ENCODE measurements at regions of chr10 and their contacts with region 1.

Region 1: GRCh38 chr10:1368842-1369171 is 312.6 kb downstream of the WDR37 start:
- DNase-seq: peak in 14 of 35 experiments; percentile 9 to 41 (median 25)
- ATAC-seq: peak in 3 of 4 experiments; percentile 53 to 71 (median 60)
- H3K4me3 ChIP-seq: no peak overlapping the region
- H3K4me3 Mint-ChIP-seq: no peak overlapping the region
- H3K27ac ChIP-seq: no peak overlapping the region
- H3K27ac Mint-ChIP-seq: no peak overlapping the region
- H3K4me1 ChIP-seq: peaks cover 0 to 2% of the 10 kb centered on the region in 2 experiments
- H3K4me1 Mint-ChIP-seq: no peaks in the 10 kb centered on the region
- H3K27me3 ChIP-seq: peaks cover 0 to 38% of the 10 kb centered on the region in 2 experiments
- H3K27me3 Mint-ChIP-seq: peaks cover 33 to 37% of the 10 kb centered on the region in 2 donors

Region 2: DNA sequence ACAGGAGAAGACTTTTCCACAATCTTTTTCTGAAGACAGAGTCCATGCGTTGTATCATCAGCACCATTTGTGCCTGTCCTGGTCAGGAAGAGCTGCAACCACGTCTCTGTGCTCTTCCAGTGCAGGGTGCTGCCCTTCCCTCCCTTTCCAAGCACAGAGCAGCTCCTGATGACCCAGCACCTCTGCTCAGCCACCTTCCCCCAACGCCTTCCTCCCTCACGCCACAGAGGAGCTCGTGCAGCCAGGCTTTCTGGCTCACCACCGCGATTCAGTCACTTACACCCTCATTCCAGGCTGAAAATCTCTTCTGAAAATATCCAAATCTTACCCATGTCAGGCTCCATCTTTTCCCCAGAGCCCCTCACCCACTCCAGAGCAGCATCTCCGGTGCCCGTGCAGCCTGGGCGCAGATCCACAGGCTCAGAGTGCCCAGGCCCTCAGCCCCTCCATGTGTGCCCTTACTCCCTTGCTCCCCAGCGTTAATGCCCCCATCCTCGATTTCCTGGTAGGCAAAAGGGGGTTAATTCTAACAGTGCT is 860.8 kb before region 1 on chr10:
- CTCF ChIA-PET with region 1: interaction called in 1 of 2 experiments, 10 read pairs
- POLR2A ChIA-PET with region 1: no interaction called
- DNase-seq: no peak
- ATAC-seq: no peak
- H3K4me3 ChIP-seq: no peak overlapping the region
- H3K4me3 Mint-ChIP-seq: no peak overlapping the region
- H3K27ac ChIP-seq: no peak overlapping the region
- H3K27ac Mint-ChIP-seq: no peak overlapping the region
- H3K4me1 ChIP-seq: peaks cover 0 to 10% of the 10 kb centered on the region in 2 experiments
- H3K4me1 Mint-ChIP-seq: peaks cover 13 to 24% (median 17%) of the 10 kb centered on the region in 3 donors
- H3K27me3 ChIP-seq: peaks cover 0 to 19% of the 10 kb centered on the region in 2 experiments
- H3K27me3 Mint-ChIP-seq: peaks cover 6 to 11% of the 10 kb centered on the region in 2 donors

Region 3: DNA sequence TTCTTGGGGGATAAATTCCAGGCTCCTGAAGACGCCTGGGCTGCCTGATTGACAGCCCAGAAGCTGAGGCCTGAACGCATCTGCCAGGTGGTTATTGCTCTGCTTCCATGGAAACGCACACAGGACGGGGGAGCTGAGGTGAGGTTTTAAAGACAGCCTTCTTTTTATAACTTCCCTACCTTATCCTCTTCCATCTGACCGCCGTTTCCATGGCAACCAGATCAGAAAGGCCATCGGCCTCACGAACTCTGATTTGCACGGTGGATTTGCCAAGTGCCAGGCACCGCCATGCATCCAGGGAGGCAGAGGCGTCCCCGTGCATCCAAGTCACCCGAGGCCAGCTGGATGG is 107.6 kb after region 1 on chr10:
- CTCF ChIA-PET with region 1: no interaction called
- POLR2A ChIA-PET with region 1: no interaction called
- DNase-seq: no peak
- ATAC-seq: no peak
- H3K4me3 ChIP-seq: no peak overlapping the region
- H3K4me3 Mint-ChIP-seq: no peak overlapping the region
- H3K27ac ChIP-seq: no peak overlapping the region
- H3K27ac Mint-ChIP-seq: no peak overlapping the region
- H3K4me1 ChIP-seq: no peaks in the 10 kb centered on the region
- H3K4me1 Mint-ChIP-seq: no peaks in the 10 kb centered on the region
- H3K27me3 ChIP-seq: peaks cover 0 to 31% of the 10 kb centered on the region in 2 experiments
- H3K27me3 Mint-ChIP-seq: peaks cover 13 to 33% of the 10 kb centered on the region in 2 donors